Activated CD4-positive, alpha-beta memory T cell treated with anti-CD3 and anti-CD28 coated beads for 36 hours (primary cell): ENCODE measurements at regions of chr9 and their contacts with region 1.

Region 1: GRCh38 chr9:15180124-15180523 is 126.9 kb downstream of the TTC39B start:
- DNase-seq: no peak
- H3K4me3 Mint-ChIP-seq: no peak overlapping the region
- H3K27ac Mint-ChIP-seq: no peak overlapping the region
- H3K4me1 Mint-ChIP-seq: peaks cover 14% of the 10 kb centered on the region
- H3K27me3 Mint-ChIP-seq: no peaks in the 10 kb centered on the region

Region 2: GRCh38 chr9:15155826-15156225 is 24.3 kb before region 1 on chr9:
- CTCF ChIA-PET with region 1: no interaction called
- POLR2A ChIA-PET with region 1: no interaction called
- intact Hi-C with region 1: loop called (anchors 2 kb)
- DNase-seq: no peak
- H3K4me3 Mint-ChIP-seq: no peak overlapping the region
- H3K27ac Mint-ChIP-seq: no peak overlapping the region
- H3K4me1 Mint-ChIP-seq: no peaks in the 10 kb centered on the region
- H3K27me3 Mint-ChIP-seq: peaks cover 4% of the 10 kb centered on the region